A673 (cell line): ENCODE measurements at regions of chr10 and their contacts with region 1.

Region 1: GRCh38 chr10:117074621-117075020 is 63.4 kb downstream of the VAX1 start:
- DNase-seq: no peak
- H3K4me3 ChIP-seq: no peak overlapping the region
- H3K27ac ChIP-seq: no peak overlapping the region
- H3K4me1 ChIP-seq: peaks cover 40% of the 10 kb centered on the region
- H3K27me3 ChIP-seq: no peaks in the 10 kb centered on the region
- CTCF ChIP-seq: no peak

Region 2: DNA sequence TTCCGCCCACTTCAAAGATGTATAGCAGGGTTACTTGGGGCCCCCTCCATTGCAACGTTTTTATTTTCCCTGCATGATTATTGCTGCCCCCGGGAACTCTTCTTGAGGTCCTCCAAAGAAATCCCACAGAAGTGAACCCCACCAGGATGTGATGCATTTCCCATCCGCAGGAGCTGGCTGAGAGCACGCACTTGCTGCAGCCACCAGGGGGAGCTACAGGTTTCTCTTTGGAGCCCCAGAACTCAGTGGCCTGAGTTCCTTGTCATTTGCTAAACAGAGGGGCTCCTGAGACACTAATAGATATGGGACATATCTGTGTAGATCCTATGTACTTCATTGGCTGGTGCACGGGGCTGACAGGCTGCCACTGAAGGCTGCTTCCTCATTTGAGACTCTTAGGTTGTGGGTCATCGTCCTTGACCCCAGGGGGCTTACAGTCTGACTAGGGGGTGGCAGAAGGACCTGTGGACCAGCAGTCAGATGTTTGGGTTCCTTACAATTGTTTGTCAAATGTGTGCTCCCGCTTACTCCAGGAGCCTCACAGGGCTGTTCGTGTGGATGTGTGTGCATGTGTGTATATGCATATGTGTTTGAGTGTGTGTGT is 277.6 kb before region 1 on chr10:
- CTCF ChIA-PET with region 1: no interaction called
- POLR2A ChIA-PET with region 1: no interaction called
- intact Hi-C with region 1: loop called (anchors 5 kb)
- DNase-seq: peak; percentile 93
- H3K4me3 ChIP-seq: no peak overlapping the region
- H3K27ac ChIP-seq: no peak overlapping the region
- H3K4me1 ChIP-seq: peaks cover 24% of the 10 kb centered on the region
- H3K27me3 ChIP-seq: no peaks in the 10 kb centered on the region
- CTCF ChIP-seq: peak; percentile 97

Region 3: GRCh38 chr10:116836902-116837523 is 237.6 kb before region 1 on chr10:
- CTCF ChIA-PET with region 1: no interaction called
- POLR2A ChIA-PET with region 1: no interaction called
- intact Hi-C with region 1: loop called (anchors 5 kb)
- DNase-seq: peak; percentile 56
- H3K4me3 ChIP-seq: no peak overlapping the region
- H3K27ac ChIP-seq: no peak overlapping the region
- H3K4me1 ChIP-seq: peaks cover 42% of the 10 kb centered on the region
- H3K27me3 ChIP-seq: no peaks in the 10 kb centered on the region
- CTCF ChIP-seq: peak; percentile 63

Region 4: GRCh38 chr10:116891208-116891607 is 183.4 kb before region 1 on chr10:
- CTCF ChIA-PET with region 1: no interaction called
- POLR2A ChIA-PET with region 1: no interaction called
- intact Hi-C with region 1: loop called (anchors 5 kb)
- DNase-seq: peak; percentile 97
- H3K4me3 ChIP-seq: no peak overlapping the region
- H3K27ac ChIP-seq: peak overlapping the region; percentile 46
- H3K4me1 ChIP-seq: peaks cover 63% of the 10 kb centered on the region
- H3K27me3 ChIP-seq: no peaks in the 10 kb centered on the region
- CTCF ChIP-seq: no peak

Region 5: DNA sequence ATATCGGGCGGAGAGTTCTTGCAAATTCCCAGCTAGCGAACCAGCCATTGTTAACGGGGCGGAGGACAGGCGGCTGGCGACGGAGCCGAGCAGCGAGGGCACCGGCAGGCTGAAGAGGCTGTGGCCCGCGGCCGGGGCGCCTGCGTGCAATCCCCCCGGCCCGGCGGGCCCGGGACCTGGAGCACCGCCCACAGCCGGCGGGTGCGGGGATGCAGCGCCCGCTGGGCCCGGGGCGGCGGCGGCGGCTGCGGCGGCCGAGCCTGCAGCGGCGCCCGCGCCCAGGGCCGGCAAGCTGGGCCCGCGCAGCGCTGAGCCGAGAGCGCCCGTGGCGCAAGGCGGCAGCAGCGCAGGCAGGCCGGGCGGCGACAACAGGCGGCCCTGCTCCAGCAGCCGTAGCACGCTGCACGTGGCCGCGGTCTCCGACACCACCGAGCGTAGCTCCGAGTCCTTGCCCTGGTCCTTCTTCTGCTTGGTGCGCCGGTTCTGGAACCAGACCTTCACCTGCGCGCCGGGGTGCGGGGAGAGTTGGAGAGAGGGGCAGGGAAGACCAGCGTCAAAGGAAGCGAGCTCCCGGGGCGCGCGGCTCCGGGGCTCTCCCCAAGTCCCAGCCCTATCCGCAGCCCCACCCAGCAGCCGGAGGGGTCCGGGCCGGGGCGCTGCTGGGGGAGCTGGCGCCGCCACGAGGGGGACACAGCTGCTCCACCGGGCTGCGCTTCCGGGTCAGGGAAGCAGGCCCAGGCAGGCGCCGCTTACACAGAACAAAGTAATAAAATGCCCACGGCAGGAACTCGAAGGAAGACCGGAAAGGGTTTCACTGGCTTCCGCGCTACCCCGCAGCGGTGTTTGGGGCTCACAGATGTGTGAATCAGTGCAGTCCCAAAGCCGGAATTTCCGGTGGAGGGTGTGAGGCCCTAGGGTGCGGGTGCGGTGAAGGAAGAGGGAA is 59.7 kb after region 1 on chr10:
- CTCF ChIA-PET with region 1: no interaction called
- POLR2A ChIA-PET with region 1: interaction called, 5 read pairs
- intact Hi-C with region 1: loop called (anchors 5 kb)
- DNase-seq: peak; percentile 98
- H3K4me3 ChIP-seq: peak overlapping the region; percentile 97
- H3K27ac ChIP-seq: peak overlapping the region; percentile 100
- H3K4me1 ChIP-seq: peaks cover 71% of the 10 kb centered on the region
- H3K27me3 ChIP-seq: no peaks in the 10 kb centered on the region
- CTCF ChIP-seq: peak; percentile 48

Region 6: DNA sequence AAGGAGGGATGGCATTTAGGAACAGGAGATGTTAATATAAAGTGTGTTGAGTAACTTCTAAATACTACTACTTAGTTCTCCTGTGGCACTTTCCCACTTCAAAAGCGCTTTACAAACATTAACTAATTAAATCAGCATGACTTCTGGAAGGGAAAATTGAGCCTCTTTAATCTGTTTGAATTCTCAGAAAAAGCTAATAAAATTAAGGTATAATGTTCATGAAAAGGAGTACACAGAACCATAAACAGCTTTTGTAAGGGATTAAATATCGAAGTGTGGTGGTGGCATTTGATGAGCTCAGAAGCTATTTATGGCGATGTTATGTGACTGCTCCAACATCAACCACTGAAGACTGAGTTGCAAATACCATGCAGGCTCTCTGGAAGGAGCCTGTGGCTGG is 73.7 kb after region 1 on chr10:
- CTCF ChIA-PET with region 1: no interaction called
- POLR2A ChIA-PET with region 1: no interaction called
- intact Hi-C with region 1: no loop called
- DNase-seq: peak; percentile 34
- H3K4me3 ChIP-seq: no peak overlapping the region
- H3K27ac ChIP-seq: no peak overlapping the region
- H3K4me1 ChIP-seq: peaks cover 11% of the 10 kb centered on the region
- H3K27me3 ChIP-seq: no peaks in the 10 kb centered on the region
- CTCF ChIP-seq: no peak